Heart right ventricle (tissue), 16 donors: ENCODE measurements at regions of chr10 and their contacts with region 1.

Region 1: DNA sequence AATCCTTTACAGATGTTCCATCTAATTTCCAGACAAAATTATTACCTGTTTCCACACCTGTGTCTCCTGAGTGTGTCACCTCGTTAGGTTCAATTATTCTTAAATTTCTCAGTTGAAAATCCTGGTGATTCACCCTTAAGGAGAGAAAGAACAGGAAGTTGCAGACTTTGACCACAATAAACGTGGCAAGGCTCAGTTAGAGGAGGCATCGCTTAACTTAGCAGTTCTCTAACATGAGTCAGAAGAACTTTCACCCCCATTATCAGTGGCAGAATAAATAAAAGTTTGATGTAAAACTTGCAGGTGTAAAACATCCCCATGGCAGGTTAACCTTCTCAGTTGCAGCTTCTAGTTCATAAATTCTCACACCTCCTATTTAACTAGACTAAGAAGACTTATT is 8.3 kb downstream of the XPNPEP1 start:
- DNase-seq: no peak
- ATAC-seq: no peak
- H3K4me3 ChIP-seq: no peak overlapping the region
- H3K27ac ChIP-seq: peak overlapping the region in 1 of 10 donors; percentile 57
- H3K4me1 ChIP-seq: peaks cover 0 to 78% (median 12%) of the 10 kb centered on the region in 9 donors
- H3K27me3 ChIP-seq: no peaks in the 10 kb centered on the region
- CTCF ChIP-seq: no peak

Region 2: DNA sequence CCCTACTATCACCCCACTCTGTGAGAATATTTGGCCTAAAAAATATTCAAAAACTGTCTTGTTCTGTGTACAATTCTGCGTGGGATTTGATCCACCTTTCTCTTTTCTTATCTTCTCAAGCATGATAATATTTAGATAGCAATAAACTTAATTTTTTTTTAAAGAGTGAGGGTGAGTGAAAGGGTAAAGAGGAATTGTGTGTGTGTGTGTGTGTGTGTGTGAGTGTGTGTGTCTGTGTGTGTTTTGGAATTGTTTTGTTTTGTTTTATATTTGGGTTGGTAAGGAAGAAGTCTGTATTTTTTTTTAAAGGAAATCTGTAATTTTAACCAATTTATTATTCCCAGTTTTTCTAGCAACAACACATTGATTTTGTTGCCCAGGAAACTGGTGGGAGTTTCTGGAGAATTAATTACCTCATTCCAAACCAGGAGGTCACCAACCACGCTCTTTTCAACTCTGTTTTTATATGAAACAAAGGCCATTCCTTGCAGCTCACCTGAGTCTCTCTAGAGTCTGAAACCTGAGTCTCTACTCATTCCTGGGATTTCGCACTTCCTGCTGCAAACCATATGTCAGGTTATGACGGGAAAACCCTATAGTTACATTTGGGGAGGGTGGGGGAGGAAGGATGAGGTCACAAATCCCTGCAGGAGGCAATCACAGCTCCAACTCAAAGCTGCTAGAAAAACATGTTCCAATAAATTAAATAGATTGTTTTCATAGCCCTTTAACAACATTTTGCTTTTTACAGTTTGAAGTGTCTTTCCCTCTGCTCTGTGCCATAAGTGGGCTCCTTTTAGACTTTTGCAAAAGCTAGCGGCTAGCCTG is 46.4 kb after region 1 on chr10:
- intact Hi-C with region 1: loop called in 1 of 10 experiments (anchors 5 kb)
- DNase-seq: no peak
- ATAC-seq: peak in 1 of 8 donors; percentile 12
- H3K4me3 ChIP-seq: no peak overlapping the region
- H3K27ac ChIP-seq: peak overlapping the region in 2 of 10 donors; percentile 33 to 67
- H3K4me1 ChIP-seq: peaks cover 0 to 37% (median 18%) of the 10 kb centered on the region in 9 donors
- H3K27me3 ChIP-seq: no peaks in the 10 kb centered on the region
- CTCF ChIP-seq: no peak